A673 (cell line): ENCODE measurements at regions of chr12 and their contacts with region 1.

Region 1: DNA sequence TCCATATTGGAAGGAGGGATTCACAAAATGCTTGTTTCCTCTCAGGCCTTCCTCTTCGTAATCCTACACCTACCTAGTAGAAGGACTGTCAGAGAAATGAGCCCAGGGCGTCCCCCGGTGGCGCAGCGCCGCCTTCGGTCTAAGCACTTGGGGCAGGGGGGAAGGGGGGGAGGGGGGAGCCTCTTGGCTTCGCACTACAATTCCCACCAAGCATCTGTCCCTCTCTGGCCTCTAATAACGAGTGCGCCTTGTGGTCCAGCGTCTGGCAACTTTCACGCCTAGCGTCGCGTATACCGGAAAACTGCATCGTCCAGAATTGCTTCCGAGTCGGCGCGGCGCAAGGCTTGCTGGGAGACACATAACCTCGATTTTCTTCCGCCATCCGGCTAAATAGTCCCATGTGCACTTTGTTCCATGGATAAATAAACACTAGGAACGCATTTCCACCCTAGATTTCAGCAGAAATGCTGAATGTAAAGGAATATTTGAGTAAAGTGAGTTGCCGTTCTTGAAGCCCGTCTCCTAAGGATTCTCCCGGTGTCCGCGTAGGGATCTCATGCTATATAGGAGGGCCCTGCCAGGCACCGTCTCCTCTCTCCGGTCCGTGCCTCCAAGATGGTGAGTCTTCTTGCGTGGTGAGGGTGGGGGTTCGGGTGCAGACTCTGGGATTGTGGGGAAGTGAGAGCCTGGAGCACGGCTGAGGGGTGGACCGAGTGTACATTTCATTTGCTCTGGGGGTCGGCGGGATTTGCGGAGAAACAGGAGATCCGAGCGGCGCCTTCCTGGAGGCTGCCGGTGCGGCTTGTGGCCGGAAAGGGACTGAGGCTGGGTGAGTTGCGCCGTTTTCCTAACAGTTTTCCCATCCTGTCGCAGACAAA is at the start of gene RPS26:
- DNase-seq: peak; percentile 100
- H3K4me3 ChIP-seq: peak within 1 kb of the TSS; percentile 73
- H3K27ac ChIP-seq: peak within 1 kb of the TSS; percentile 97
- H3K4me1 ChIP-seq: peaks cover 40% of the 10 kb centered on the region
- H3K27me3 ChIP-seq: no peaks in the 10 kb centered on the region
- CTCF ChIP-seq: peak; percentile 56
- total RNA-seq, gene RPS26: 51.9 and 69.9 TPM in 2 replicates

Region 2: GRCh38 chr12:55738123-55739024 is 303.4 kb before region 1 on chr12:
- CTCF ChIA-PET with region 1: no interaction called
- POLR2A ChIA-PET with region 1: no interaction called
- intact Hi-C with region 1: loop called (anchors 2 kb)
- DNase-seq: peak; percentile 97
- H3K4me3 ChIP-seq: peak overlapping the region; percentile 59
- H3K27ac ChIP-seq: peak overlapping the region; percentile 72
- H3K4me1 ChIP-seq: peaks cover 15% of the 10 kb centered on the region
- H3K27me3 ChIP-seq: no peaks in the 10 kb centered on the region
- CTCF ChIP-seq: peak; percentile 90

Region 3: DNA sequence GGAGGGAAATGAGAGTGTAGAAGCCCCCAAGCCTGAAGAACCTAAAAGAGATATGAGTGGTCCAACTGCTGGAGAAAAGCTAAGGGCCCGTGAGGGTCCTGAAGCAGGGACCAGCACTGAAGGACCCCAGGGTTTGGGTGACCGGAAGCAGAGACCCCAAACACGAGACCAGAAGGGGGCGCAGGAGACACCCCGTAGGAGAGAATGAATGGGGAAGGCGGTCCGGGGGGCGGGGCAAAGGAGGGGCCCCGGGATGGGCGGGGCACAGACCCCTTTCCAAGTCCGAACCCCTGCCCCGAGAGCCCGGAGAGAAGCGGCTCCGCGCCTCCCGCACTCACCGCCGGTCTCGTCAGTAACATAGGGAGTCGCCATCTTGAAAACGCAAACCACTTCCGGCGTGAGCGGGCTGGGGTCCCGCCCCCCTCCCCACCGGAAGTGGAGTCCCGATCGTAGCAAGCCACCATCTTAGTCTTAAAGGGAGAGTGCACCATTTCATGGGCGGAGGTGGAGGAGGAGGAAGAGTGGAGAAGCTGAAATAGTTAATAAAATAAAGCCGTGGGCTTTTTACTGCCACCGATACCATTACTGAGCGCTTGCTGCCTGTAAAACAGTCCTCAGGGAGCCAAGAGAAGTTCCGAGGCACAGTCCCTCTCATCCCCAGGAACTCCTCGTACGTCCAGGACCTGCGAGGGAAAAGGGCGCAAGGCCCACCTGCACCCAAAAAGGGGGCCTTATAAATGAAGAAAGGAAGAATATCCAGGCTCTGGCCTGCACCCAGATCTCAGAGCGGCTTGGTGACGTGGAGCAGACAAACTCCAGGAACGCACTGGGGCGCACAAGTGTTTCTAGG is 114.8 kb before region 1 on chr12:
- CTCF ChIA-PET with region 1: no interaction called
- POLR2A ChIA-PET with region 1: no interaction called
- intact Hi-C with region 1: loop called (anchors 2 kb)
- DNase-seq: peak; percentile 97
- H3K4me3 ChIP-seq: peak overlapping the region; percentile 91
- H3K27ac ChIP-seq: peak overlapping the region; percentile 95
- H3K4me1 ChIP-seq: peaks cover 32% of the 10 kb centered on the region
- H3K27me3 ChIP-seq: no peaks in the 10 kb centered on the region
- CTCF ChIP-seq: peak; percentile 96

Region 4: GRCh38 chr12:56010111-56010570 is 31.6 kb before region 1 on chr12:
- CTCF ChIA-PET with region 1: no interaction called
- POLR2A ChIA-PET with region 1: interaction called, 4 read pairs
- intact Hi-C with region 1: loop called (anchors 2 kb)
- DNase-seq: no peak
- H3K4me3 ChIP-seq: no peak overlapping the region
- H3K27ac ChIP-seq: no peak overlapping the region
- H3K4me1 ChIP-seq: peaks cover 4% of the 10 kb centered on the region
- H3K27me3 ChIP-seq: no peaks in the 10 kb centered on the region
- CTCF ChIP-seq: no peak

Region 5: DNA sequence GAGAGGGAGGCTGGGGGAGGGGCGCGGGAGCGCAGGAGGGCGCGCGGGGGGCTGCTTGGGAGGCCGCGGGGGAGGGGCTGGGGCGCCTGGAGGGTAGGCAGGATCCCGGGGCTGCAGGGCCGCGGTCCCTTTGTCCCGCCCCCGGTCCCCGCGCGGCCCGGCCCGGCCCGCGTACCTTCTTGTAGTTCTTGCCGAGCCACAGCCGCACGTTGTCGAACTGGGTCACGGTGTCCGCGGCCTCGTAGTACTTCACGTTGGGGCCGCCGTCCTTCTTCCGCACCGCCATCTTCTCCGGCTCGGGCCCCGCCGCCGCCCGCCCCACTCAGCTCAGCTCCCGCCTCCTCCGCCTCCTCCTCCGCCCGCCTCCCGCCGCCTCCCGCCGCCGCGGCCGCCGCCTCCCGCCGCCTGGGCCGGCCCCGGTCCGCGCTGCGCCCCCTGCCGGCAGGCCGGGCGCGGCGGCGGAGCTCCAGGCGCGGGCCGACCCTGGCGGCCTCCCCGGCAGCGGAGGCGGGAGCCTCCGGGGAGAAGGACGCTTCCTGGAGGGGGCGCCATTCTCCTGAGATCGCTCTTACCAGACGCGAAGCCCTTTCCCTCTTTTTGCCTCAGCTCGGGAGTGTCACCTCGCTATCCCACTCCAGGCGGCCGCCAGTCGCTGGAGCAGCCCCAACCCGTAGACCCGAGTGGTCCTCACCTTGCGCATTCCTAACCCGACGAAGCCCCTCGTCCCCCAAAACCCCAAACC is 147.6 kb after region 1 on chr12 and contains the start of gene SMARCC2:
- CTCF ChIA-PET with region 1: no interaction called
- POLR2A ChIA-PET with region 1: no interaction called
- intact Hi-C with region 1: loop called (anchors 10 kb)
- DNase-seq: peak; percentile 95
- H3K4me3 ChIP-seq: peak within 1 kb of the TSS; percentile 83
- H3K27ac ChIP-seq: peak within 1 kb of the TSS; percentile 82
- H3K4me1 ChIP-seq: peaks cover 13% of the 10 kb centered on the region
- H3K27me3 ChIP-seq: no peaks in the 10 kb centered on the region
- CTCF ChIP-seq: peak; percentile 74
- total RNA-seq, gene SMARCC2: 133 and 140 TPM in 2 replicates